WTC11 (cell line): ENCODE measurements at regions of chr6 and their contacts with region 1.

Region 1: GRCh38 chr6:43228951-43229802 is at the start of gene DNPH1:
- DNase-seq: peak; percentile 87
- ATAC-seq: peak; percentile 94
- H3K4me3 Mint-ChIP-seq: peak within 1 kb of the TSS; percentile 75
- H3K27ac Mint-ChIP-seq: no peak within 1 kb of the TSS
- H3K4me1 Mint-ChIP-seq: peaks cover 8% of the 10 kb centered on the region
- H3K27me3 Mint-ChIP-seq: peaks cover 42% of the 10 kb centered on the region
- CTCF ChIP-seq: peak; percentile 83
- total RNA-seq, gene DNPH1: 48.4 to 56.4 TPM (median 55.4 TPM) in 3 replicates

Region 2: DNA sequence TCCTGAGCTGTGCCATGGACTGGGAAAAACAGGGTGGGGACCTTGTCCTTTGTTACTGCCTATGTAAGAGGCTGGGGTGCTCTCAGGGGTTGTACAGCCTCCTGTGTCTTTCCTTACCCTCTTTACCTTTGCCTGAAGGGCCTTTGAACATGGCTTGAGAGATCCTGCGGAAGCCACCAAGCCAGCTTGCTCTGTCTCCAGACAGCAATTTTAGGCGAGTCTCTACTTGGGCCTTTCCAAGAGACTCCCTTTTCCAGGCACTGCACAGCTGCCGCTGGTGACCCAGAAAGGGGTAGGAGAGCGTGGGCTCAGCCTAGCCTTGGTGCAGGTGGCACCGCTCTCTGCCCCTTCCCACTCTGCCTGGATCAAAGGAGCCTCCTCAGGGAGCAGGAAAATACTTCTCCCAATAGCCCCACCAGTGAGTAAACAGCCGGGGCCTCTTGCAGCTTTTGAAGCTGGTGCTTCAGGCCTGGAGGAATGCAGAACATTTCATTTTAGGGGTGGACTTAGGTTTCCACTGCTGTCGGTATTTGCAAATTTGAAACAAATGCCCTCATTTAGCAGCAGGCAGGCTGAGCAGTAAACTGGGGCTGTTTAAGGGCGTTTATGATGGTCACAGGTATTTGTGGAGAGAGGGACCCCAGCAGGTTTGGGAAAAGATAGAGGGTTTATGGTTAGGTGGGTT is 139.2 kb before region 1 on chr6:
- CTCF ChIA-PET with region 1: no interaction called
- POLR2A ChIA-PET with region 1: no interaction called
- DNase-seq: no peak
- ATAC-seq: peak; percentile 43
- H3K4me3 Mint-ChIP-seq: peak overlapping the region; percentile 63
- H3K27ac Mint-ChIP-seq: peak overlapping the region; percentile 99
- H3K4me1 Mint-ChIP-seq: peaks cover 78% of the 10 kb centered on the region
- H3K27me3 Mint-ChIP-seq: no peaks in the 10 kb centered on the region
- CTCF ChIP-seq: no peak

Region 3: GRCh38 chr6:43174263-43175112 is 54.7 kb before region 1 on chr6:
- CTCF ChIA-PET with region 1: interaction called, 16 read pairs
- POLR2A ChIA-PET with region 1: interaction called, 7 read pairs
- DNase-seq: peak; percentile 97
- ATAC-seq: peak; percentile 70
- H3K4me3 Mint-ChIP-seq: peak overlapping the region; percentile 94
- H3K27ac Mint-ChIP-seq: peak overlapping the region; percentile 86
- H3K4me1 Mint-ChIP-seq: peaks cover 31% of the 10 kb centered on the region
- H3K27me3 Mint-ChIP-seq: peaks cover 10% of the 10 kb centered on the region
- CTCF ChIP-seq: no peak

Region 4: GRCh38 chr6:43216200-43216599 is 13.0 kb before region 1 on chr6:
- CTCF ChIA-PET with region 1: interaction called, 22 read pairs
- POLR2A ChIA-PET with region 1: no interaction called
- DNase-seq: no peak
- ATAC-seq: no peak
- H3K4me3 Mint-ChIP-seq: no peak overlapping the region
- H3K27ac Mint-ChIP-seq: no peak overlapping the region
- H3K4me1 Mint-ChIP-seq: peaks cover 5% of the 10 kb centered on the region; the same call in 1 of the 2 replicates
- H3K27me3 Mint-ChIP-seq: no peaks in the 10 kb centered on the region
- CTCF ChIP-seq: no peak

Region 5: GRCh38 chr6:43263314-43264178 is 34.4 kb after region 1 on chr6:
- CTCF ChIA-PET with region 1: interaction called, 16 read pairs
- POLR2A ChIA-PET with region 1: interaction called, 3 read pairs
- DNase-seq: peak; percentile 90
- ATAC-seq: peak; percentile 87
- H3K4me3 Mint-ChIP-seq: no peak overlapping the region
- H3K27ac Mint-ChIP-seq: peak overlapping the region; percentile 28; the same call in 1 of the 2 replicates
- H3K4me1 Mint-ChIP-seq: peaks cover 24% of the 10 kb centered on the region
- H3K27me3 Mint-ChIP-seq: peaks cover 14% of the 10 kb centered on the region
- CTCF ChIP-seq: peak; percentile 60; the same call in 1 of the 2 replicates

Region 6: DNA sequence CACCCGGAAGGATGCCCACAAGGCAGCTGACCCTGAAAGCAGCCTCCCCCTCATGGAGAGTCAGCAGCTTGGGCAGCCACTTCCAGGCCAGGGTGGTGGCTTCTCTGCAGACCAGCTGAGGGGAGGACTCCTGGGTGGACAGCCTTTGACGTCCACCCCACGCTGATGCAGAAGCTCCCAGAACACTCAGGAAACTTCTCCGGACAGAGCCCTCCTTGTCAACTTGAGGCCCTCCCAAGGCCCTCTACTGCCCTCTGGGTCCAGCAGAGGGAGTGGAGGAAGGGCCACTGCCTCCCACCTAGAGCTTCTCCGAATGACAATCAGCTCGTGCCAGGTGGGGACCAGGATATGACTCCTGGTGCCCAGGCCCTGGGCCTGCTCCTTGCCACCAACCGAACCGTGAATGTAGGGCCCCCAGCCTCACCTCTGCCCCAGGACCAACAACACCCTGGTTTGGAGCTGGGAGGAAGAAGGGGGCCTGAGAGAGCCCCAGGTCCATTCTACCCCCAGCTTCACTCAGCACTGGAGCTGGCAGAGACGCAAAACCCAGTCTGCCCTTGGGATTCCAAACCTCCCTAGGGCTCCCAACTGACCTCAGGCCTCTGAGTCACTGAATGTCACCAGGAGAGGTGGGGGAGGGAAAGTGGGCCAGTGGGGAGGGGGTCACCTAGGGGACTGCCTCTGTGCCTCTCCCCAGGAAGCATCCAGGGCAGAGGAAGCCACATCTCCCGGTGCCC is 58.0 kb after region 1 on chr6:
- CTCF ChIA-PET with region 1: interaction called, 20 read pairs
- POLR2A ChIA-PET with region 1: no interaction called
- DNase-seq: no peak
- ATAC-seq: peak; percentile 59
- H3K4me3 Mint-ChIP-seq: 0 out of 2 replicates have a peak overlapping the region, but pooled peaks have one; percentile 40
- H3K27ac Mint-ChIP-seq: no peak overlapping the region
- H3K4me1 Mint-ChIP-seq: peaks cover 7% of the 10 kb centered on the region
- H3K27me3 Mint-ChIP-seq: peaks cover 21% of the 10 kb centered on the region
- CTCF ChIP-seq: no peak

Region 7: GRCh38 chr6:43334466-43335095 is 105.4 kb after region 1 on chr6:
- CTCF ChIA-PET with region 1: interaction called, 19 read pairs
- POLR2A ChIA-PET with region 1: no interaction called
- DNase-seq: no peak
- ATAC-seq: peak; percentile 97
- H3K4me3 Mint-ChIP-seq: no peak overlapping the region
- H3K27ac Mint-ChIP-seq: peak overlapping the region; percentile 50; the same call in 1 of the 2 replicates
- H3K4me1 Mint-ChIP-seq: 0 out of 2 replicates have a peak, but pooled peaks cover 4% of the 10 kb centered on the region
- H3K27me3 Mint-ChIP-seq: no peaks in the 10 kb centered on the region; the same call in 1 of the 2 replicates
- CTCF ChIP-seq: no peak

Region 8: DNA sequence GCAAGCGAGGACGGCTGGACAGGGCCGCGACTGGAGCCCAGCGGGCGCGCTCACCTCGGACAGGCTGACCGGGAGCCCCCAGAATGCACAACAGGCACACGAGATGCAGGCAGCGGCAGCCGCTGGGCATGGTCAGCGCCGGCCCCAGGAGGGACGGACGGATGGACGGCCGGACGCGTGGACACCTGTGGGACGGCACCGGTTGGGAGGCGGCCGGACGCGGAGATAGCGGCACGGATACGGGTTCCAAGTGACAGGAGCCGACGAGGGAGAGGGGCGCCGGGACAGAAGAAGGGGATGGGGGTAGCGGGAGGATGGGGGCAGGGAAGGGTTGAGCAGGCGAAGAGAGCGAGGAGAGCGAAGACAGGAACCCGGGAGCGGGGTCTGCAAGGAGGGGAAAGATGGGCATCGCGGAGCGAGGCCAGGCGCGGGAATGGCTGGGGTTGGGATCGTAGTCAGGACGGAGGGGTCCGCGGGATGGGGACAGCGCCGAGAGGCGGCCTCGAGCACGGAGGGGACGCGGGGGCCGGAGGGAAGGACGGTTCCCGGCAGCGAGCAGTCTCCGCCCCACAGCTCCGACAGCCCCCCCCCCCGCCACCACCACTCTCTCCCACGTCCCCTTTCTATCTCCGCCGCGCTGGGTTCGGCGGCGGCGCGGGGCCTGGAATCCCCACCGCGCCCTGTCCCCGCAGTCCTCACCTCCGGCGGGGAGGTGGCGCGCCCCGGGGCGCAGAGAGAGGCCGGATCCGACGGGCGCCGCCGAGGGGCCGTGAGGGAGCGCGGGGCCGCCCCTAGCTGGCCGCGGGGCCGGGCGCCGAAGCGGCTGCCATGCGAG is 225.7 kb after region 1 on chr6:
- CTCF ChIA-PET with region 1: interaction called, 10 read pairs
- POLR2A ChIA-PET with region 1: no interaction called
- DNase-seq: peak; percentile 94
- ATAC-seq: peak; percentile 32
- H3K4me3 Mint-ChIP-seq: peak overlapping the region; percentile 65
- H3K27ac Mint-ChIP-seq: no peak overlapping the region
- H3K4me1 Mint-ChIP-seq: peaks cover 16% of the 10 kb centered on the region
- H3K27me3 Mint-ChIP-seq: peaks cover 43% of the 10 kb centered on the region
- CTCF ChIP-seq: no peak